ENCODE measurements at regions of chr12 and their contacts with region 1.

Region 1: DNA sequence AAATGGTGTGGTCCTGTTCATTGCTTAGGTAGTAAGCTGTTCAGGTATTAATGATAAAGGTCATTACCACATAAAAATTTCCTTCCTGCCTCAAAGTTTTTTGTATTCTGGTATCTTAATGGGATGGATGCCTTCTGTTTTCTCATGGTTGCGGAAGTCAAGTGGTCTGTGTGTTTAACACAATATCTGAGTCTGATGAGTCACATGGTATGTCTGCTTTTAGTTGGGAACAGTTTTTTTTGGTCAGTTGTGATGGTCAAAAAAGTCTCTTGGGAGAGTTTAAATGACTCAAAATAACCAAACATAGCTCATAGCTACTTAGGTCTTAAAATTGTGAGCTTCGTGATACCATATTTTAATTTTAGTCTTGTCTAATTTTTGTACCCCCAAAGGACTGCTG is 40.7 kb downstream of the STK38L start:
- DNase-seq: no peak

Region 2: GRCh38 chr12:26937875-26938700 is 346.7 kb before region 1 on chr12 and contains the starts of genes FGFR1OP2 and INTS13:
- intact Hi-C with region 1: no loop called
- DNase-seq: peak; percentile 100
- total RNA-seq, gene FGFR1OP2: 46.1 to 48.6 TPM
- total RNA-seq, gene INTS13: 15.1 to 23.0 TPM

Region 3: GRCh38 chr12:27179400-27180214 is 105.1 kb before region 1 on chr12:
- intact Hi-C with region 1: loop called in 1 of 2 experiments (anchors 10 kb)
- DNase-seq: no peak

Region 4: DNA sequence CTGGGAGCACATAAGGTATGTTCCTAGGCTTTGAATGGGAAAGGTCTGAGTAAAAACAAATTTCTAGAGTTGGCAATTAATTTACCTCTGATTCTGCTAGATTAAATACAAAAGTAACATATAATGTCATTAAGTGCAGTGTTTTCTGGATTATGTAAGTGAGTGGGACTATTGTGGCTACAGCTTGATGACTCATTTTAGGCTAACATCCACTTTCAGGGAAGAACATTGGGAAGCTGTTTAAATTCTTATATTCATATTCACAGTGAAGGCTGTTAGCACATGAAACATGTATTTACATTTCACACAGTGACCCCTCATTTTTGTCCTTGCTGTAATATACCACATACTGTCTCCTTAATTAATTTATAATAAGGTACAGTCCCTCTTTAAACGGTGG is 34.7 kb after region 1 on chr12:
- intact Hi-C with region 1: no loop called
- DNase-seq: no peak

Measured in posterior vena cava (tissue), 2 donors.